Activated CD8-positive, alpha-beta memory T cell treated with anti-CD3 and anti-CD28 coated beads, Interleukin-2, amount 10 ng/mL, durations not matched to agents 7 days and 5 days (primary cell): ENCODE measurements at regions of chr3 and their contacts with region 1.

Region 1: DNA sequence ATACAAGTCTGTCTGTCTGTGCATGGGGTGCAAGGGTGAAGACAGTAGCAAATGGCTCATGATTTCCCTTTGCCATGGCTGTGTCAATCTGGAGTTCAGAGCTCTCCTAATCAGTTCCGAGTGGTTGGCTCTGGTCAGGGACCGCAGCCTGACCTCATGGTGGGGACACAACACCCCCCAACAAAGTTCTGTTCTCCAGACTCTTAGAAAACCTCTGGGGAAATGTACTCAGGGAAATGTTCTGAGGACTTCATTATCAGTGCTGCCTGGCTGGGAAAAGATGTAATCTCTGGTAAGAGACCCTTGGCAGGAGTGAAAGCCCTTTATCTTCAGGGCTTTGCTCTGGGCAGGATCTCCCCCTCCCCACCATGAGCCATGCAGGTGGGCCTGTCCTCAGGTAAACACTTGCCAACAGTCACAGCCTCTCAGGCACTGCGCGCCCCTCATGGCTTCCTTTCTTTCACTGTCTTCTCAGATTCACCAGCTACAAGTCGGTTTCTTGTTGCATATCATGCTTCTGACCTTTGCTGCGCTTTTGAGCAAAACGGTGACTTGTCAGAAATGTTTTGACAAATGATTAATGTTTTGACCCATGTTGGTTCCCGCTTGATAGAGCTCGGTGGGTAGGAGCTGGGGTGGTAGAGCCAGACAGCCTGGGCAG is 95.5 kb downstream of the ST6GAL1 start:
- DNase-seq: peak; percentile 61
- ATAC-seq: peak; percentile 52
- H3K4me3 Mint-ChIP-seq: peak overlapping the region; percentile 71
- H3K27ac Mint-ChIP-seq: peak overlapping the region; percentile 95
- H3K4me1 Mint-ChIP-seq: peaks cover 57% of the 10 kb centered on the region
- H3K27me3 Mint-ChIP-seq: no peaks in the 10 kb centered on the region

Region 2: GRCh38 chr3:187000711-187001151 is 25.1 kb before region 1 on chr3:
- CTCF ChIA-PET with region 1: interaction called, 33 read pairs
- DNase-seq: peak; percentile 62
- ATAC-seq: peak; percentile 73
- H3K4me3 Mint-ChIP-seq: peak overlapping the region; percentile 50
- H3K27ac Mint-ChIP-seq: peak overlapping the region; percentile 91
- H3K4me1 Mint-ChIP-seq: peaks cover 73% of the 10 kb centered on the region
- H3K27me3 Mint-ChIP-seq: no peaks in the 10 kb centered on the region